Sigmoid colon (tissue), 7 donors: ENCODE measurements at regions of chr3 and their contacts with region 1.

Region 1: GRCh38 chr3:173548261-173548660 is 150.7 kb downstream of the NLGN1 start:
- DNase-seq: no peak
- H3K4me3 ChIP-seq: peak overlapping the region in 1 of 4 donors; percentile 13
- H3K27ac ChIP-seq: peak overlapping the region in 1 of 4 donors; percentile 40
- H3K4me1 ChIP-seq: peaks cover 0 to 10% (median under 1%) of the 10 kb centered on the region in 4 donors
- H3K27me3 ChIP-seq: no peaks in the 10 kb centered on the region
- CTCF ChIP-seq: no peak
- EP300 ChIP-seq: no peak
- POLR2A ChIP-seq: no peak

Region 2: GRCh38 chr3:173411375-173411973 is 136.8 kb before region 1 on chr3:
- intact Hi-C with region 1: loop called (anchors 5 kb)
- DNase-seq: no peak
- H3K4me3 ChIP-seq: no peak overlapping the region
- H3K27ac ChIP-seq: no peak overlapping the region
- H3K4me1 ChIP-seq: peaks cover 0 to 15% (median 4%) of the 10 kb centered on the region in 4 donors
- H3K27me3 ChIP-seq: no peaks in the 10 kb centered on the region
- CTCF ChIP-seq: peak in 3 of 4 experiments; percentile 14 to 42 (median 40)
- EP300 ChIP-seq: no peak
- POLR2A ChIP-seq: no peak